ENCODE measurements at regions of chr12 and their contacts with region 1.

Region 1: GRCh38 chr12:4148418-4149056 is 125.0 kb upstream of the CCND2 start:
- DNase-seq: no peak
- H3K4me3 Mint-ChIP-seq: no peak overlapping the region
- H3K27ac Mint-ChIP-seq: peak overlapping the region; percentile 60
- H3K4me1 Mint-ChIP-seq: peaks cover 94% of the 10 kb centered on the region
- H3K27me3 Mint-ChIP-seq: no peaks in the 10 kb centered on the region

Region 2: GRCh38 chr12:4118017-4118510 is 30.5 kb before region 1 on chr12:
- CTCF ChIA-PET with region 1: interaction called, 10 read pairs
- DNase-seq: peak; percentile 44
- H3K4me3 Mint-ChIP-seq: peak overlapping the region; percentile 56
- H3K27ac Mint-ChIP-seq: peak overlapping the region; percentile 86
- H3K4me1 Mint-ChIP-seq: peaks cover 66% of the 10 kb centered on the region
- H3K27me3 Mint-ChIP-seq: peaks cover 16% of the 10 kb centered on the region

Region 3: GRCh38 chr12:4215229-4216186 is 67.0 kb after region 1 on chr12:
- CTCF ChIA-PET with region 1: interaction called, 11 read pairs
- DNase-seq: peak; percentile 50
- H3K4me3 Mint-ChIP-seq: peak overlapping the region; percentile 45
- H3K27ac Mint-ChIP-seq: peak overlapping the region; percentile 83
- H3K4me1 Mint-ChIP-seq: peaks cover 31% of the 10 kb centered on the region
- H3K27me3 Mint-ChIP-seq: peaks cover 22% of the 10 kb centered on the region